CD4-positive, alpha-beta memory T cell (primary cell): ENCODE measurements at regions of chr6 and their contacts with region 1.

Region 1: DNA sequence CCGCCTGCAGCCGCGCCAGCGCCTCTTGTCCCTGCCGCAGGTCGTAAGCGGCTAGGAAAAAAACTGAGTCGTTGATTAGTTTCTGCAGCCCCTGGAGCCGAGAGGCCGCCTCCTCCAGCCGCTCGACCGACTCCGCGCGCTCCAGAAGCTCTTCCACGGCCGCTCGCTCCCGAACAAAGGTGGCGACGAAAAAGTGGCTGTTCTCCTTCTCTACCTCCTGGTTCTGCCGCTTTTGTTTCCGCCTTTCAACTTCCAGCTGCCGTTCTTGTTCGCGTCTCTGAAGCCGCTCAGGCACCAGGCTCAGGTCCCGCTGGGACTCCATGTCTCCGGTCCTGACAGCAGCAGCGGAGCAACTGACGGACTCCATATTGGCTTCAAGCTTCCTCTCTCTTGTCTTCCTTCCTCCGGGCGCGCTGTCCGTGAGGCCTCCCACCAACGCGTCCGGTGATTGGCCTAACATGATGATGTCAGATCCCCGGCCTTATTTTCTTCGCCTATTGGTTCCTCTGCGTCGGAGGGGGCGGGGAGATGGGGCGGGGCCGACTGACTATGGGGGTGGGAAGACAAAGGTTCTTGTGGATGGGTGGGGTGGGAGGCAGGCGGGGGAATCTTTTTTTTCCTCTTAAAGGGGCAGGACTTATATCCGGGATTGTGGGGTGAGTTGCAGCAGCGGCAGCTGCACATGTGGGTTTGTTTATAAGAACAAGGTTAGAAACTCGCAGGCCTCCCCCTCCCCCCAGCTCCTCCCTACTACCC is at the start of gene TBCC:
- DNase-seq: peak; percentile 91 to 98 (median 94)
- H3K4me3 ChIP-seq: peak within 1 kb of the TSS; percentile 82 to 99
- H3K4me3 Mint-ChIP-seq: peak within 1 kb of the TSS; percentile 100
- H3K27ac ChIP-seq: peak within 1 kb of the TSS; percentile 88
- H3K27ac Mint-ChIP-seq: peak within 1 kb of the TSS; percentile 94 to 100 (median 100)
- H3K4me1 ChIP-seq: peaks cover 38% of the 10 kb centered on the region
- H3K4me1 Mint-ChIP-seq: peaks cover 18 to 50% (median 37%) of the 10 kb centered on the region in 4 donors
- H3K27me3 ChIP-seq: no peaks in the 10 kb centered on the region
- H3K27me3 Mint-ChIP-seq: no peaks in the 10 kb centered on the region
- total RNA-seq, gene TBCC: 57.4 to 64.4 TPM

Region 2: DNA sequence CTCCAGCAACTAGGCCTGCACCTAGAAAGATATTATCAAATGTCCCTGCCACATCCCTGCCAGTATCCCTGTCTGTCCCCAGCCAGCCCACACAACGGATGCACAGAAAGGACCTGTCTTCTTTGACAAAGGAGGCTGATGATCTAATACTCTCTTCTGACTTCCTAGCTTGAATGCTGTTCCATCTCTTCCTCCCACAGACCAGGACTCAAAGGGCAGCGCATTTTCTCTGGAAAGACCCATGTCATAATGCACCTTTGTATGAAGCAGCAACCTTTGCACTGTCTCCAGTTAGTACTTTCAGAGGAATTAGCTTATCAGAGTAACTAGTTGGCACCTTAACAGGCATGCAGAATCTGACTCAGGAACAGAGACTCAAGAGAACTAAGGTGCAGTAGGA is 748.9 kb before region 1 on chr6:
- CTCF ChIA-PET with region 1: no interaction called
- POLR2A ChIA-PET with region 1: no interaction called
- intact Hi-C with region 1: no loop called
- DNase-seq: no peak
- H3K4me3 ChIP-seq: no peak overlapping the region
- H3K4me3 Mint-ChIP-seq: no peak overlapping the region
- H3K27ac ChIP-seq: peak overlapping the region; percentile 1
- H3K27ac Mint-ChIP-seq: peak overlapping the region in 5 of 7 donors; percentile 32 to 89 (median 64)
- H3K4me1 ChIP-seq: peaks cover 18% of the 10 kb centered on the region
- H3K4me1 Mint-ChIP-seq: peaks cover 19 to 60% (median 37%) of the 10 kb centered on the region in 4 donors
- H3K27me3 ChIP-seq: no peaks in the 10 kb centered on the region
- H3K27me3 Mint-ChIP-seq: no peaks in the 10 kb centered on the region

Region 3: DNA sequence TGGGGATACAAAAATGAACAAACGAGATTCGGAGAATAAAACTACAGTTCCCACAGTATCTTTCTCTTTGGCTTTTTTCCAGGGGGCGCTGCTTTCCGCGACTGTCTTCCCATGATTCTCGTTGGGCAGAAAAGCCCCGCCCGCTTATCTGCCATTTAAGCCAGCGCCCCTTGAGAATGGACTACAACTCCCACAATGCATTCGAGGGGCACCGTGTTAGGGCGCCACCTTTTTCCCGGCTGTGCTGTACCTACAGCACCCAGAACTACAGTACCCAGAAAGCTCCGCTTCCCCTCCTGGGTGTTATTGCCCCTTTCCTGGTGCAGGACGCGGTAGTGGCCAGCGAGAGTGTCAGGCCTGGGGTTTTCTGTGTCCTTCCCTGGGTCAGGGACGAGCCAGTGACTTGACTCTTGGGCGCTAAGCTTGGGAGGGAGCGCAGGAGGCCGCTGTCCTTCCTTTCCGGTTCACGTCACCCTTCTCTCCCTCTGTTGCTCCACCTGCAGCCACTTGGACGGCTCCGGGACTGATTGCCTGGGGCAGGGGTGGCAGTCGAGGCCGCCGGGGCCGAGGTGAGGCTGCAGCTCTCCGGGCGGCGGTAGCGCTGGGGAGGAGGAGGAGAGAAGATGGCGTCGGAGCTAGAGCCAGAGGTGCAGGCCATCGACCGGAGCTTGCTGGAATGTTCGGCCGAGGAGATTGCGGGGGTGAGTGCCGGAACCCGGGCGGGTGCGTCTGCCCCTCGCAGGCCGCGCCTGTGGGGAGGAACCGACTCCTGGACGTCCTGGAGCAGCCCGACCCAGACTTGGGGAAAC is 182.0 kb before region 1 on chr6 and contains the start of gene UBR2:
- CTCF ChIA-PET with region 1: no interaction called
- POLR2A ChIA-PET with region 1: interaction called, 16 read pairs
- intact Hi-C with region 1: no loop called
- DNase-seq: peak; percentile 92 to 98 (median 95)
- H3K4me3 ChIP-seq: peak within 1 kb of the TSS; percentile 98 to 100
- H3K4me3 Mint-ChIP-seq: peak within 1 kb of the TSS; percentile 92 to 100 (median 98)
- H3K27ac ChIP-seq: peak within 1 kb of the TSS; percentile 94
- H3K27ac Mint-ChIP-seq: peak within 1 kb of the TSS; percentile 90 to 98 (median 96)
- H3K4me1 ChIP-seq: peaks cover 33% of the 10 kb centered on the region
- H3K4me1 Mint-ChIP-seq: peaks cover 21 to 43% (median 28%) of the 10 kb centered on the region in 4 donors
- H3K27me3 ChIP-seq: no peaks in the 10 kb centered on the region
- H3K27me3 Mint-ChIP-seq: peaks cover 0 to 1% of the 10 kb centered on the region in 2 donors
- total RNA-seq, gene UBR2: 55.0 to 55.7 TPM

Region 4: DNA sequence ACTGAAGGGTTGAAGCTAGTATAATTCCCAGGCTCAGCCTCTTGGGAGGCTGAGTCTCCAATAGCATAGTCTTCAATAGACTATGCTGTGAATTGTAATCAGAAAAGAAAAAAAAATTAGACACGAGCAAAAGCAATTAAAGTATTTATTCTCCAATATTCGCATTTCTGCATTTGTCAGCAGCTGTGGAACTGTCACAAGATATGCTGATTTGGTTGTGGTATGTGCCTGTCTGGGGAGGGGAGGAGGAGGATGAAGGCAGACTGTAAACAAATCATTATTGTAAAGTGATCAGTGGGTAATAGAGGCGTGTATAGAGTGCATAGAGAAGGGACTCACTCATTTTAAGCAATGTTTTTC is 25.8 kb after region 1 on chr6:
- CTCF ChIA-PET with region 1: interaction called, 81 read pairs
- POLR2A ChIA-PET with region 1: interaction called, 1,692 read pairs
- intact Hi-C with region 1: loop called (anchors 1 kb)
- DNase-seq: peak in 4 of 5 donors; percentile 75 to 79 (median 77)
- H3K4me3 ChIP-seq: peak overlapping the region; percentile 7 to 11
- H3K4me3 Mint-ChIP-seq: peak overlapping the region; percentile 72 to 90 (median 84)
- H3K27ac ChIP-seq: peak overlapping the region; percentile 89
- H3K27ac Mint-ChIP-seq: peak overlapping the region; percentile 97 to 100 (median 100)
- H3K4me1 ChIP-seq: peaks cover 77% of the 10 kb centered on the region
- H3K4me1 Mint-ChIP-seq: peaks cover 54 to 88% (median 70%) of the 10 kb centered on the region in 4 donors
- H3K27me3 ChIP-seq: no peaks in the 10 kb centered on the region
- H3K27me3 Mint-ChIP-seq: no peaks in the 10 kb centered on the region

Region 5: DNA sequence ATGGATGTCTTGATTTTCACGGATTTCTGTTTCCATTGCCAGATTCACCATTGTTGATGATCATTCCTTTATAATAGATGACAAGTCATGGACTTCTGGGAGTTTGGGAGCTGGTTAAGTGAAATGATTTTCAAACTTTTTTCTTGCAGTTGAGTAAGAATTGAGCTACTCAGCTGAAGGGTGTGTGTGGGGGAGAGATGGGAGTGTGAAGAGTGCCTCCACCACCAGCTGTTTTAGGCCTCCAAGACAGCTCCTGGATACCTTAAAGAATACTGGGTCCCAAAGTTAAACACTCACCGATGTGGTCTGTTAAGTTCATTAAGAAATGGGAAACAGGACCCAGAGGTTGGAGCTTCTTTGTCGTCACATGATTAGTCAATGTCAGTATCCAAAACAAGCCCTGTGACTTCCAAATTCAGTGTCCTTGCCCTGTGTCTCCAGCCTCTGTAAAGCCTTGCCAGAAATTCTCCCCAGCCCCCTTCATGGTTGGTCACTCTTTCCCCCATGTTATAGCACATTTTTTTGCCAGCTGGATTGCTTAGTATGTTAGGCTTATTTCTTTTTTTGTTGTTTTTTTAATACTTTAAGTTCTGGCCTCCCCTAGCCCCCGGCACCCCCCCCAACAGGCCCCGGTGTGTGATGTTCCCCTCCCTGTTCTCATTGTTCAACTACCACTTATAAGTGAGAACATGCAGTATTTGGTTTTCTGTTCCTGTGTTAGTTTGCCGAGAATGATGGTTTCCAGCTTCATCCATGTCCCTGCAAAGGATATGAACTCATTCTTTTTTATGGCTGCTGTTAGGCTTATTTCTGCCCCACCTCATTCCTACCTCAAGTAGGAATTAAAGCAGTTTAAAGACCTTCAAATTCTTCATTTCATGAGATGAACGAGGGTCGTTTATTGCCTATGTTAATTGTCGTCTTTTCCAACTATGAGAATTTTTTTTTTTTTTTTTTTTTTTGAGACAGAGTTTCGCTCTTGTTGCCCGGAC is 62.9 kb after region 1 on chr6:
- CTCF ChIA-PET with region 1: no interaction called
- POLR2A ChIA-PET with region 1: interaction called, 18 read pairs
- intact Hi-C with region 1: no loop called
- DNase-seq: no peak
- H3K4me3 ChIP-seq: no peak overlapping the region
- H3K4me3 Mint-ChIP-seq: no peak overlapping the region
- H3K27ac ChIP-seq: no peak overlapping the region
- H3K27ac Mint-ChIP-seq: peak overlapping the region in 5 of 7 donors; percentile 29 to 66 (median 57)
- H3K4me1 ChIP-seq: peaks cover 3% of the 10 kb centered on the region
- H3K4me1 Mint-ChIP-seq: peaks cover 15 to 24% (median 19%) of the 10 kb centered on the region in 4 donors
- H3K27me3 ChIP-seq: no peaks in the 10 kb centered on the region
- H3K27me3 Mint-ChIP-seq: no peaks in the 10 kb centered on the region

Region 6: DNA sequence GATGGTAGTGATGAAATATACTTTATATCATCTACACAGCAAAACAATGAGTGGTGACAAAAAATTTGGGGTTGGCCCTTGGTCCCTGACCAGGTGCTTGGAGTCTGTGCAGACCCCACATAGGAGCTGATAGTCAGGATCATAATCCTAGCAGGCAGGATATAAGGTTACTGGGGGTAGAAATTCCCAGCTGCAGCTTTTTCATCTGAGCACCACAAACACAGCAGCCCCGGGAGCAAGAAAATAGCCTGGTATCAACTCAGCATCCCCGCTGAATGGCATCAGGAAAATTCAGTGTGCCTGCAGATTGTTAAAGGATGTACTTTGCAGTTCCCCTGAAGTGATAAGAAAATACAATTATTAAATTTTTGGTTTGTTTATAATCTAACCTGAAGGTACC is 105.7 kb after region 1 on chr6:
- CTCF ChIA-PET with region 1: no interaction called
- POLR2A ChIA-PET with region 1: interaction called, 18 read pairs
- intact Hi-C with region 1: no loop called
- DNase-seq: no peak
- H3K4me3 ChIP-seq: no peak overlapping the region
- H3K4me3 Mint-ChIP-seq: no peak overlapping the region
- H3K27ac ChIP-seq: no peak overlapping the region
- H3K27ac Mint-ChIP-seq: no peak overlapping the region
- H3K4me1 ChIP-seq: no peaks in the 10 kb centered on the region
- H3K4me1 Mint-ChIP-seq: peaks cover 0 to 4% (median 0%) of the 10 kb centered on the region in 4 donors
- H3K27me3 ChIP-seq: no peaks in the 10 kb centered on the region
- H3K27me3 Mint-ChIP-seq: no peaks in the 10 kb centered on the region

Region 7: GRCh38 chr6:43013843-43014433 is 268.1 kb after region 1 on chr6 and contains the starts of genes KLHDC3 and MEA1:
- CTCF ChIA-PET with region 1: no interaction called
- POLR2A ChIA-PET with region 1: interaction called, 5 read pairs
- intact Hi-C with region 1: loop called (anchors 5 kb)
- DNase-seq: peak; percentile 98 to 100 (median 100)
- H3K4me3 ChIP-seq: peak within 1 kb of the TSS; percentile 75 to 84
- H3K4me3 Mint-ChIP-seq: peak within 1 kb of the TSS; percentile 91 to 97 (median 94)
- H3K27ac ChIP-seq: peak within 1 kb of the TSS; percentile 71
- H3K27ac Mint-ChIP-seq: peak within 1 kb of the TSS; percentile 75 to 98 (median 94)
- H3K4me1 ChIP-seq: peaks cover 54% of the 10 kb centered on the region
- H3K4me1 Mint-ChIP-seq: peaks cover 39 to 71% (median 56%) of the 10 kb centered on the region in 4 donors
- H3K27me3 ChIP-seq: no peaks in the 10 kb centered on the region
- H3K27me3 Mint-ChIP-seq: no peaks in the 10 kb centered on the region
- total RNA-seq, gene KLHDC3: 66.6 to 67.9 TPM
- total RNA-seq, gene MEA1: 36.2 to 36.3 TPM